ENCODE measurements at regions of chr1 and their contacts with region 1.

Region 1: GRCh38 chr1:198937231-198938031 is 298.6 kb downstream of the PTPRC start:
- DNase-seq: peak; percentile 64
- H3K4me3 Mint-ChIP-seq: no peak overlapping the region
- H3K27ac Mint-ChIP-seq: peak overlapping the region; percentile 85
- H3K4me1 Mint-ChIP-seq: peaks cover 20% of the 10 kb centered on the region
- H3K27me3 Mint-ChIP-seq: no peaks in the 10 kb centered on the region

Region 2: DNA sequence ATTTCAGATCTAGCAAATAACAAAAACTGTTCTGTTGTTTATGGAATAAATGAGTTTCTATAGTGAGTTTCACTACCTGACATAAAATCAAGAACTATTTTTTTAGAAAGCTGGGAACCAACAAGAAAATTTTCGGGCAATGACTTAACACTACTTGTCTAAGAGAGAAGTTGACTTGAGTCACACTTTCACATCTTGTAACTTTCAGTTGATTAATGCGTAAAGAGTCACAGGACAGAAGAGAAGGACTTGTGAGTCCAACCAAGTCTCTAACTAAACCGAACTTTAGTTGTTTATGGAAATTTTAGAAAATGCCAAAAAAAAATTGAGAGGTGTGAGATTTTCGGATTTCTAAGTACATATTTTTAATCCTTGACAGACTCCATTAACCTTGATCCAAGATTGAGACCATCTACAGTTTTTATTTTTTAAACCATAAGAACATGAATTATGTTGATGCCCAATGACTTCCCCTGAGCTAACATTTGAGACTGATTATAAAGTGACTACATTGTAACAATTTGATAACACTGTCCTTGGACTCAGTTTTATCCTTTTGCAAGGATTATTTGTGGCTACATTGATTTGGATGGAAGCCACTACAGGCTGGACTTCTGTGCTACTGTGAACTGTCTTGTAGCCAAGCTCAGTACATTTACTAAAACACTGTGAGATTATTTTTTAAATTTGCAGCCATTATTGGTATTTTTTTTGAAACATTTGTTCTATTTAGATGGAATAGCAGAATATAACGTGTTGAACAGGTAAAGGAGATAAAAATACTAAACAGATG is 14.6 kb before region 1 on chr1:
- CTCF ChIA-PET with region 1: interaction called, 3 read pairs
- POLR2A ChIA-PET with region 1: interaction called, 58 read pairs
- DNase-seq: no peak
- H3K4me3 Mint-ChIP-seq: no peak overlapping the region
- H3K27ac Mint-ChIP-seq: peak overlapping the region; percentile 33
- H3K4me1 Mint-ChIP-seq: peaks cover 63% of the 10 kb centered on the region
- H3K27me3 Mint-ChIP-seq: no peaks in the 10 kb centered on the region

Region 3: DNA sequence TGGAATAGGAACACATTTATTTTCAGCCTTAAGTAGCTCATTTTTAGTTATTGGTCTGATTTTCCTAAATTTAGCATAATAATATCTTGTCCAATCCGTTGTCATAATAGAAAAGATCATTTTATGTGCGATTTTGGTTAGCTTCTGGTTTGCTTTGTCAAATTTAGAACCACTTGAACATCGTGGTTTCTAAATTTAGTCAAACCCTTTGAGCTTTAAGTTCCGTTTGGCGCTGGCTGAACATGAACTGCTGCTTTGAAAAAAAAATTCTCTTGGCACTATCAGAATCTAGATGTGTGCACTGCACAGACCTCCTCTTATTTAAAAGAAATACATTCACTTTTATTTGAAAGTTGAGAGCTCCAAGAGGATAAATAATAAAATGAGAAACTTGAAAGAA is 72.0 kb after region 1 on chr1:
- CTCF ChIA-PET with region 1: interaction called, 3 read pairs
- POLR2A ChIA-PET with region 1: interaction called, 15 read pairs
- DNase-seq: no peak
- H3K4me3 Mint-ChIP-seq: peak overlapping the region; percentile 22
- H3K27ac Mint-ChIP-seq: peak overlapping the region; percentile 70
- H3K4me1 Mint-ChIP-seq: peaks cover 30% of the 10 kb centered on the region
- H3K27me3 Mint-ChIP-seq: no peaks in the 10 kb centered on the region

Region 4: DNA sequence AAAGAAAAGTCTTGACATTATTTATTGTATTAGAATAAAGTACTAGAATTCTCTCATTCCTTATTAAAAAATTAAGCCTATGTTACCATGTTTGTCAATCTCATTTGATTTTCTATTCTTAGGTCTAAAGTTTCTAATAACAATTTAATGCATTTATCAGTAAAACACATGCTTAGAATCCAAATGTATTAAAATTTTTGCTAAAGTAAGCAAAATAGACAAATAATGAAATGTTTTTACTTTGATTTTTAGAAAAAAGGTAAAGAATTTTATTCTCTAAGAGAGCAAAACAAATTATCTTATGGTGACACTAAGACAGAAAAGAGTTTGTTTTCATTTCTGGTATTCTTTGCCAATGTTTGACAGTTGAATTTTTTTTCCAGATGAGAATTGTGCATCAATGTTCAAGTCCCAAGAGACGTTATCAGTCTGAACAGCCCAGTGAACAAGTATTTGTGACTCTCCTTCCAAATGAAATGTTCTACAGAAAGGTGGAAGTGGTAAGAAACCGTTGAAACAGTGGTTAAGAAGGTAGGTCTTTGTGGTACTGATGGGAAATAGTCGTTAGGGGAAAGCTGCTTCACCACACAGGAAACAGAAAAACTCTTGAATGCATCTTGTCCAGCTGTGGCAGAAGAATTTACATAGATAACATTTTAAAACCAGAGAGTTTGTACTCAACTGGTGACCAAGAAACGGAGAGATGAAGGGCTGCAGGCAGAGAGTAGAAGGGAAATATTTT is 103.9 kb after region 1 on chr1:
- CTCF ChIA-PET with region 1: interaction called, 5 read pairs
- POLR2A ChIA-PET with region 1: interaction called, 69 read pairs
- DNase-seq: peak; percentile 54
- H3K4me3 Mint-ChIP-seq: peak overlapping the region; percentile 25
- H3K27ac Mint-ChIP-seq: peak overlapping the region; percentile 90
- H3K4me1 Mint-ChIP-seq: peaks cover 43% of the 10 kb centered on the region
- H3K27me3 Mint-ChIP-seq: no peaks in the 10 kb centered on the region

Region 5: GRCh38 chr1:199619221-199619620 is 681.8 kb after region 1 on chr1:
- CTCF ChIA-PET with region 1: no interaction called
- POLR2A ChIA-PET with region 1: no interaction called
- DNase-seq: no peak
- H3K4me3 Mint-ChIP-seq: no peak overlapping the region
- H3K27ac Mint-ChIP-seq: no peak overlapping the region
- H3K4me1 Mint-ChIP-seq: no peaks in the 10 kb centered on the region
- H3K27me3 Mint-ChIP-seq: no peaks in the 10 kb centered on the region